Left ventricle myocardium superior (tissue), 1 donor: ENCODE measurements at regions of chr14 and their contacts with region 1.

Region 1: GRCh38 chr14:61461808-61462275 is 140.5 kb downstream of the PRKCH start:
- DNase-seq: no peak
- ATAC-seq: peak; percentile 35

Region 2: DNA sequence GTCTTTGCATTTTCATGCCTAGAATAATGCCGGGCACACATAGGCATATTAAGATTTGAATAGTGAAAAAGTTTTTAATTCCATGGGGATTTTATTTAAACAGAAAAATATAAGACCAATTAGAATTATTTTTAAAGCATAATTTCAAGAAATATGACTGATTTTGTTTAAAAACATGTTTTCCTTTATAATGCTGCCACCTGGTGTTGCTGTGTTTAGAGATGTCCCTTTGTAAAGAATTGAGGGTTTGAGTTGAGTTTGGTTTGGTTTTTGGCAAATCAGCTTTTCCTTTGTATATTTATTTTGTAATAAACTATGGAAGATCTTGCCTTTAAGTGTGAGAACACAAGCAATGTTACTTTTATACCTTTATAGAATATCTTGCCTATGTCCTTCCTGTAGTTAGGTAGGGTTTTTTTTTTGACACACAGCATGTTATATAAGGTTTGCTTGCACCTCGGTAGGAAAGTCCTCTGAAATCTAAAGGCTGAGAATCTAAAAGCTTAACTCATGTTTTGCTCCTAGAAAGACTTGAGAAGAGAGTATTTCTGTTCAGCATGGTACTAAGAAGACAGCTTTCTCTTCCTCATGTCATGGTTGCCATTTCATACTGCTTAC is 269.0 kb after region 1 on chr14:
- intact Hi-C with region 1: loop called (anchors 5 kb)
- DNase-seq: no peak
- ATAC-seq: no peak

Region 3: GRCh38 chr14:61837336-61838229 is 375.7 kb after region 1 on chr14:
- intact Hi-C with region 1: loop called (anchors 2 kb)
- DNase-seq: peak; percentile 73
- ATAC-seq: peak; percentile 95

Region 4: DNA sequence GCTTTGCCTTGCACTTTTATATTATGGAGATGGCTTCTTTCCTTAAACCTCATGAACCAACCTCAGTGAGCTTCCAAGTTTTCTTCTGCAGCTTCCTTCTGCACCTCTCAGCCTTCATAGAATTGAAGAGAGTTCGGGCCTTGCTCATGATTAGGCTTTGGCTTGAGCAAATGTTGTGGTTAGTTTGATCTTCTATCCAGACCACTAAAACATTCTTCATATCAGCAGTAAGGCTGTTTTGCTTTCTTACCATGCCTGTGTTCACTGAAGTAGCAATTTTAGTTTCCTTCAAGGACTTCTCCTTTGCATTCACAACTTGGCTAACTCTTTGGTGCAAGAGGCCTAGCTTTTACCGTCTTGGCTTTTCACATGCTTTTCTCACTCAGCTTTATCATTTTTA is 425.8 kb after region 1 on chr14:
- intact Hi-C with region 1: no loop called
- DNase-seq: no peak
- ATAC-seq: no peak